ENCODE measurements at regions of chr3 and their contacts with region 1.

Region 1: GRCh38 chr3:153161138-153161713 is 800 bp upstream of the RAP2B start:
- DNase-seq: peak; percentile 90 to 96 (median 94)
- H3K4me3 ChIP-seq: peak overlapping the region; percentile 75 to 93
- H3K4me3 Mint-ChIP-seq: peak overlapping the region; percentile 97 to 100 (median 99)
- H3K27ac ChIP-seq: peak overlapping the region; percentile 76
- H3K27ac Mint-ChIP-seq: peak overlapping the region; percentile 96 to 98 (median 98)
- H3K4me1 ChIP-seq: peaks cover 31% of the 10 kb centered on the region
- H3K4me1 Mint-ChIP-seq: peaks cover 19 to 57% (median 33%) of the 10 kb centered on the region in 4 donors
- H3K27me3 ChIP-seq: no peaks in the 10 kb centered on the region
- H3K27me3 Mint-ChIP-seq: no peaks in the 10 kb centered on the region

Region 2: GRCh38 chr3:153032891-153033290 is 128.3 kb before region 1 on chr3:
- CTCF ChIA-PET with region 1: no interaction called
- POLR2A ChIA-PET with region 1: no interaction called
- intact Hi-C with region 1: no loop called
- DNase-seq: no peak
- H3K4me3 ChIP-seq: no peak overlapping the region
- H3K4me3 Mint-ChIP-seq: no peak overlapping the region
- H3K27ac ChIP-seq: no peak overlapping the region
- H3K27ac Mint-ChIP-seq: no peak overlapping the region
- H3K4me1 ChIP-seq: no peaks in the 10 kb centered on the region
- H3K4me1 Mint-ChIP-seq: no peaks in the 10 kb centered on the region
- H3K27me3 ChIP-seq: no peaks in the 10 kb centered on the region
- H3K27me3 Mint-ChIP-seq: no peaks in the 10 kb centered on the region

Region 3: DNA sequence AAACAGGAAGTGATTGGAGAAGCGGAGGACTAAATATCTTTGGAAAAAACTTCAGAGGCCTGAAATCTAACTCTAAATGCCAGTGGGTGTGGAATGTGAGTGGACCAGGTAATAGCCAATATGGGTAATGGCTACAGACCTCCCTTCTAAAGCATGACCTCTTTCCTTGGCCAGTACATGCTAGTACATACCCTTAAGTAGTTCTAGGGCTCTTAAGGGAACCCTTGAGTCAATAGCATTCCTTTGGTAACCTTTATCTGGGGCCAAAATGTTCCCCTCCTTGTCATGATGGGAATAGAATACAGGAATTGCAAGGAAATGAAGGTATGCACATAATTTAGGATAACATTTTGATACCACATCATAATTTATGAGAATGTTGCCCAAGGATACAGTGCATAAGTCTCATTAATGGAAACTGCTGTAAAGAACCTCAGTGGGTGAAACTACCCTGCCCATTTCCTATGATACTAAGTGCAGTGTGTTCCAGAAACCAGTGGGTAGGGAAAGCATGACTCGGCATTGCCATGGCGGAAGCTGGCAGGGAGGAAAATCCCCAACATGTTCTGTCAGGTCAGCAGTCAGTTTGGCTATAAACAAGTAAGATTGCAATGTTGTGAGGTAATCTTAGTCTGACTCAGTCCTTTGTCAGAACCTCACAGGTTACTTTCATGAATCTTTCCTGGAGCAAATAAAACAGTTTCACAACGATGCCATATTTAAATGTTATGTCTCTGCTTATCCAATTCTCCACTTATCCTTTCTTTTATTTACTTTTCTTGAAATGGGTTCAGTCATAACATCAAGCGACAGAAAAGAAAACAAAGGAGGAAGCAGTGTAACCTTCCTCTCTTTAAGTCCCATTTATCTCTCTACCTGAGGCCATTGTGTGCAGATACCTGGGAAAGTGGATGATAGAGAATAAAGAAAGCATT is 22.7 kb before region 1 on chr3:
- CTCF ChIA-PET with region 1: interaction called, 3 read pairs
- POLR2A ChIA-PET with region 1: no interaction called
- intact Hi-C with region 1: loop called (anchors 2 kb)
- DNase-seq: no peak
- H3K4me3 ChIP-seq: no peak overlapping the region
- H3K4me3 Mint-ChIP-seq: no peak overlapping the region
- H3K27ac ChIP-seq: no peak overlapping the region
- H3K27ac Mint-ChIP-seq: no peak overlapping the region
- H3K4me1 ChIP-seq: peaks cover 14% of the 10 kb centered on the region
- H3K4me1 Mint-ChIP-seq: peaks cover 5 to 13% (median 10%) of the 10 kb centered on the region in 4 donors
- H3K27me3 ChIP-seq: no peaks in the 10 kb centered on the region
- H3K27me3 Mint-ChIP-seq: no peaks in the 10 kb centered on the region

Region 4: DNA sequence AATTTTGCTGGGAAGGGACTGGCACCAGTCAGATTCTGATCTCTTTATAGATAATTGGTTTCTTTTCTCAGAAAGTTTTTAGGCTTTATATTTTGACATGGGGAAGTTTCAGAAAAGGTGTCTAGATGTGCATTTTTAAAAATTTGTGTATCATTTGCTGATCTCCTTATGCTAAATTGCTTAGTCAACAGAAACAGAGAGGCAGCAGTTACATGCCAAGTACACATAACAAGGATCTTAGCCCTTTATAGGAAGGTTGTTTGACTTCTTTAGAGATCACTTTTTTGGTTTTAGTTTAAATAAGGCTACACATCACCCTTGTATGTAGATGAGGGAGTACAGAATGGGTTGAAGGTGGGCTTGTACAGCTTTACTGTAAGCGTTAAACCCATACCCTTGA is 54.3 kb after region 1 on chr3:
- CTCF ChIA-PET with region 1: interaction called, 45 read pairs
- POLR2A ChIA-PET with region 1: interaction called, 206 read pairs
- intact Hi-C with region 1: loop called (anchors 1 kb)
- DNase-seq: no peak
- H3K4me3 ChIP-seq: no peak overlapping the region
- H3K4me3 Mint-ChIP-seq: peak overlapping the region in 1 of 8 donors; percentile 13
- H3K27ac ChIP-seq: no peak overlapping the region
- H3K27ac Mint-ChIP-seq: peak overlapping the region in 2 of 7 donors; percentile 29 to 75
- H3K4me1 ChIP-seq: peaks cover 60% of the 10 kb centered on the region
- H3K4me1 Mint-ChIP-seq: peaks cover 47 to 68% (median 57%) of the 10 kb centered on the region in 4 donors
- H3K27me3 ChIP-seq: no peaks in the 10 kb centered on the region
- H3K27me3 Mint-ChIP-seq: no peaks in the 10 kb centered on the region

Region 5: DNA sequence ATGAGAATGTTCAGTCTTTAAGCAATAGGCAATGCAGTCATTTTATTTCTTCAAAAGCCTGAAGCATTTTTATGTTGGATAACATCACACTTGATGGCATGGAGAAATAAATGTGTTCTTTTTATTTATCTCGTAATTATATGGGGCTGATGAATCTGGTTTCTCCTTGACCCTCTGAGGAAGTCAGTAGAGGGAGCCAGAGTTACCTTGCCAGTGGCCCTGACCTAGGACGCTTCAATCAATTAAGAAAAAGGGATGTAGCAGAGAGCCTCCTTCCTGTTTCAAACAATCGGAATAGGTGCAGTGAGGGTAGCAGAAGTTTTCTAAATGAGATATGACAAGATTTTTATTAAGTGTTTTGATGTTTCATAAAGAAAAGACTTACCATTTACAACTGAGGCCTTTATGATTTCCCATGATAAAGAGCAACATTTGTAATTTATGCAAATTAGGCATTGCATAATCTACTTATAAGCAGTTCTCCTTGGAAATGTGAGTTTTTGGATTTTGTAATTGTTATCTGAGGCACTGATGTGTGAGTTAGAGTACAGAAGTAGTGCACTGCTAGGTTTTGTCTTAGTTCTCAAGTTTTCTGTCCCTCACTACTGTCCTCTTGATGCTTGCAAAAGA is 129.9 kb after region 1 on chr3:
- CTCF ChIA-PET with region 1: interaction called, 191 read pairs
- POLR2A ChIA-PET with region 1: interaction called, 96 read pairs
- intact Hi-C with region 1: loop called (anchors 1 kb)
- DNase-seq: peak in 3 of 5 donors; percentile 15 to 21 (median 21)
- H3K4me3 ChIP-seq: no peak overlapping the region
- H3K4me3 Mint-ChIP-seq: peak overlapping the region in 3 of 8 donors; percentile 1 to 46 (median 35)
- H3K27ac ChIP-seq: no peak overlapping the region
- H3K27ac Mint-ChIP-seq: peak overlapping the region in 2 of 7 donors; percentile 50 to 71
- H3K4me1 ChIP-seq: peaks cover 50% of the 10 kb centered on the region
- H3K4me1 Mint-ChIP-seq: peaks cover 35 to 49% (median 43%) of the 10 kb centered on the region in 4 donors
- H3K27me3 ChIP-seq: no peaks in the 10 kb centered on the region
- H3K27me3 Mint-ChIP-seq: no peaks in the 10 kb centered on the region

Region 6: DNA sequence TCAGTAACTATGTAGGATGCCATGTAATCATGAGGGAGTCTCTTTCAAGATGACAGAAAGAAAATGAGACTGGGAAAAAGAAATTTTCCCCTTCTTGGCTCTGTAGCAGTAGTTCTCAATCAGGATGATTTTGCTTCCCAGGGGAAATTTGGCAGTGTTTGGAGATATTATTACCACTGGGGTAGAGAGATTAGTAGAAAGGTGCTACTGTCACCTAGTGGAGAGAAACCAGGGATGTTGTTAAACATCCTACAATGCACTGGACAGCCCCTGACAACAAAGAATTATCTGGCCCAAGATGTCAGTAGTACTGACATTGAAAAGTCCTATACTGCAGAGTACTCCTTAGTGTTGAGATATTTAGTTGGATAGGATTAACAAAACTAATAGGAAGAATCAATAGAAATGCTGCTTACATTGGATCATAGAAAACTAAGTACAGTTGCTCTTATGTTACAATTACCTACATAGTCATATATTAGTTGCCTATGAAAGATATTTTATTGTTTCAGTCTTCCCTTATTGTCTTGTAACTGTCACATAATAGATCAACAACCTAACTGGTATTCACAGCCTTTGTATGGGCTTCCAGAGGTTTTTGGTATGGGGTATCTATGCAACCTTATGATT is 434.1 kb after region 1 on chr3:
- CTCF ChIA-PET with region 1: interaction called, 4 read pairs
- POLR2A ChIA-PET with region 1: interaction called, 3 read pairs
- intact Hi-C with region 1: loop called (anchors 1 kb)
- DNase-seq: peak in 4 of 5 donors; percentile 13 to 24 (median 16)
- H3K4me3 ChIP-seq: no peak overlapping the region
- H3K4me3 Mint-ChIP-seq: no peak overlapping the region
- H3K27ac ChIP-seq: no peak overlapping the region
- H3K27ac Mint-ChIP-seq: peak overlapping the region in 1 of 7 donors; percentile 34
- H3K4me1 ChIP-seq: no peaks in the 10 kb centered on the region
- H3K4me1 Mint-ChIP-seq: peaks cover 0 to 6% (median 5%) of the 10 kb centered on the region in 4 donors
- H3K27me3 ChIP-seq: no peaks in the 10 kb centered on the region
- H3K27me3 Mint-ChIP-seq: no peaks in the 10 kb centered on the region

Region 7: GRCh38 chr3:153768561-153769469 is 607.6 kb after region 1 on chr3:
- CTCF ChIA-PET with region 1: interaction called, 16 read pairs
- POLR2A ChIA-PET with region 1: interaction called, 5 read pairs
- intact Hi-C with region 1: loop called (anchors 1 kb)
- DNase-seq: peak; percentile 52 to 65 (median 62)
- H3K4me3 ChIP-seq: no peak overlapping the region
- H3K4me3 Mint-ChIP-seq: no peak overlapping the region
- H3K27ac ChIP-seq: no peak overlapping the region
- H3K27ac Mint-ChIP-seq: no peak overlapping the region
- H3K4me1 ChIP-seq: no peaks in the 10 kb centered on the region
- H3K4me1 Mint-ChIP-seq: peaks cover 0 to 5% (median 3%) of the 10 kb centered on the region in 4 donors
- H3K27me3 ChIP-seq: no peaks in the 10 kb centered on the region
- H3K27me3 Mint-ChIP-seq: peaks cover 2 to 4% of the 10 kb centered on the region in 2 donors